Esophagus muscularis mucosa (tissue), 4 donors: ENCODE measurements at regions of chr12 and their contacts with region 1.

Region 1: DNA sequence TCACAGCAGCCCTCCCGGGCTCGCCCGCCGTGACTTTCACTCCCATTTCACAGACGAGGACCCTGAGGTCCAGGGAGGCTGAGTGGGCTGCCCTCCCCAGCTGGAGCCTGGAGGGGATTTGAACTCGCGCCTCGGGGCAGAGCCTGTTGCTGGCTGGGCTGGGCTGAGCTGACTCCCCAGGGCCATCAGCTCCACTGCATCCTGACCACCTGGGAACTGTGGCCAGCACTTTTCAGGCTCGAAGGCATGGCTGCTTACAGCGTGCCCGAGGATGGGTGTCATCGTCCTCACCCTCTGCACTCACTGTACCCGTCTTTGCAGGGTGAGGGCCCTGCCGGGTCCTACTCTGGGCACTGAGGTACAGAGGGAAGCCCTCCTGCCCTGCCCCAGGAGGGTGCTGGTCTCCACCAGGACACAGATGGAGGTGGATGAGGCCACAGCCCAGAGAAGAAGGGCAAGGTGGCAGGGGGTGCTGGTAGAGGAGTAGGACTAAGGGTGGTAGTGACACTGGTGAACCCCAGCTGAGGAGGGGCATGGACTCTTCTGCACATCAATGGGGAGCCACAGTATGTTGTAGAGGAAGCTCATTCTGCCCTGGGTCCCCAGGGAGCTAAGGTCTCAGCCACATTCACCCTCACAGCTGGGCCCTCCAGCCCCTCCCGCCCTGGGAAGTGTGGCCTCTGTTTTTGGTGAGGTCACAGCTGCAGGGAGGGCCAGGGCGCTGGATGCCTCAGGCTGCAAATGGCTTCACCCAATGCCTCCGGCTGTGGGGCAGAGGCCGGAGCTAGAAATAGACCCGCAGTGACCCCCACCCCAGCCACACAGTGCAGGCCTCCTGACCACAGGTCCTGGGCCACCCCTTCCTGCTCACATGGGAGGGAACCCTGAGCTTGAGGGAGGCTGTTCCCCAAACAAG is 365.1 kb upstream of the SFSWAP start:
- DNase-seq: no peak
- H3K4me3 ChIP-seq: no peak overlapping the region
- H3K27ac ChIP-seq: no peak overlapping the region
- H3K4me1 ChIP-seq: peaks cover 0 to 8% (median 0%) of the 10 kb centered on the region in 4 donors
- H3K27me3 ChIP-seq: peaks cover 0 to 43% (median 0%) of the 10 kb centered on the region in 4 donors
- CTCF ChIP-seq: no peak
- EP300 ChIP-seq: no peak
- POLR2A ChIP-seq: no peak

Region 2: GRCh38 chr12:131621701-131622421 is 276.1 kb after region 1 on chr12:
- intact Hi-C with region 1: loop called (anchors 2 kb)
- DNase-seq: no peak
- H3K4me3 ChIP-seq: peak overlapping the region in 1 of 4 donors; percentile 16
- H3K27ac ChIP-seq: peak overlapping the region in 1 of 4 donors; percentile 8
- H3K4me1 ChIP-seq: peaks cover 0 to 21% (median 16%) of the 10 kb centered on the region in 4 donors
- H3K27me3 ChIP-seq: peaks cover 0 to 56% (median 4%) of the 10 kb centered on the region in 4 donors
- CTCF ChIP-seq: no peak
- EP300 ChIP-seq: no peak
- POLR2A ChIP-seq: no peak